B cell (primary cell): ENCODE measurements at regions of chr18 and their contacts with region 1.

Region 1: DNA sequence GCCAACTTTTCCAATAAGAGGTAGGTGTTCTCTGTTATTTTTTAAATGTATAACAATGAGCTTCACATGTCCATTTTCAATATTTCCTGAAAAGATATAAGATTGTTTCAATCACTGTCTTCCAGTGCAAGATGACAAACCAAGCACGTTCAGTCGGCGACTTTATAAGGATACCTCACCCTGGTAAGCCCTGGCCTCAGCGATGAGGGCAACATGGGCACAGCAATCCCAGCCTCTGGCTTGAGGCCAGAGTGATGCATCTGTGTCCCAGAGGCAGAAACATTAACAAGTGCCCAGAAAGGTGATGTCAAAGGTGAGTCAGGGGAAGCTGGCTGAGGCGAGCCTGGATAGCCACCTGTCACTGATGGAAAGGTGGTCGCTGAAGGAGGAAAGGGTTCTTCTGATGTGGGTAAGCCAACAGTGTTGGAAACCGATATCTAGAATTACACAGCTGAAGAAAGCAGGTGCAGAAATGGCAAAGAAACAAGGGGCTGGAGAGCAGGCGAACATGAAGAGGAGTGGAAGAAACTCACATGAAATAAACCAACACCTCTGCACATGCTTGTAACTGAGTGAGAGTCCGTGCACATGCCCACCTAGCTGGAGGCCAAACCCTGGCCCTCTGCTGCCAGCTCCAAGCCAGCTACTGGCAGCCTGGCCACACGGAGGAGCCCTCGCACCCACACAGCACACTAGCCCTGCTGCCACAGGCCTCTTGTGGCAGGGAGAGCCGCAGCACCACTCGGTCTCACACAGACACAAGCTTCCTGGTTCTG is 65.5 kb downstream of the FBXO15 start:
- DNase-seq: peak; percentile 71
- ATAC-seq: peak; percentile 97
- H3K4me3 ChIP-seq: peak overlapping the region in 3 of 5 experiments; percentile 8 to 17 (median 11)
- H3K4me3 Mint-ChIP-seq: peak overlapping the region; percentile 69
- H3K27ac ChIP-seq: peak overlapping the region; percentile 65 to 68
- H3K27ac Mint-ChIP-seq: peak overlapping the region; percentile 93
- H3K4me1 ChIP-seq: peaks cover 15% of the 10 kb centered on the region in 2 donors
- H3K4me1 Mint-ChIP-seq: peaks cover 23% of the 10 kb centered on the region
- H3K27me3 ChIP-seq: no peaks in the 10 kb centered on the region
- H3K27me3 Mint-ChIP-seq: peaks cover 6% of the 10 kb centered on the region
- CTCF ChIP-seq: peak; percentile 27

Region 2: DNA sequence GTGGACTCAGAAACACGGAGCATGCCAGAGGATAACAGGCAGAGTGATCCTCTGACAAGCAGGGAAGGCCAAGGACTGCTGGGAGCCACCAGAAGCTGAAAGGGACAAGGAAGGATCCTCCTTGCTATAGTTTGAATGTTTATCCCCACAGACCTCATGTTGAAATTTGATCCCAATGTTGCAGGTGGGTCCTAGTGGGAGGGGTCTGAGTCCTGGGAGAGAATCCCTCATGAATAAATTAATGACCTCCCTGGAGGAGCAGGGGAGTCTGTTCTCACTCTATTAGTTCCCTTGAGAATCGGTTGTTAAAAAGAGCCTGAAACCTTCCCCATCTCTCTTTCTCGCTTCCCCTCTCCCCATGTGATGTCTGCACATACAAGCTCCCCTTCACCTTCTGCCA is 58.9 kb before region 1 on chr18:
- CTCF ChIA-PET with region 1: no interaction called
- POLR2A ChIA-PET with region 1: no interaction called
- intact Hi-C with region 1: no loop called
- DNase-seq: no peak
- ATAC-seq: no peak
- H3K4me3 ChIP-seq: no peak overlapping the region
- H3K4me3 Mint-ChIP-seq: no peak overlapping the region
- H3K27ac ChIP-seq: no peak overlapping the region
- H3K27ac Mint-ChIP-seq: no peak overlapping the region
- H3K4me1 ChIP-seq: no peaks in the 10 kb centered on the region
- H3K4me1 Mint-ChIP-seq: peaks cover 4% of the 10 kb centered on the region
- H3K27me3 ChIP-seq: no peaks in the 10 kb centered on the region
- H3K27me3 Mint-ChIP-seq: peaks cover 24% of the 10 kb centered on the region
- CTCF ChIP-seq: no peak

Region 3: GRCh38 chr18:74040459-74041332 is 41.5 kb before region 1 on chr18:
- CTCF ChIA-PET with region 1: interaction called, 17 read pairs
- POLR2A ChIA-PET with region 1: no interaction called
- intact Hi-C with region 1: loop called (anchors 1 kb)
- DNase-seq: peak; percentile 62
- ATAC-seq: peak; percentile 79
- H3K4me3 ChIP-seq: no peak overlapping the region
- H3K4me3 Mint-ChIP-seq: no peak overlapping the region
- H3K27ac ChIP-seq: no peak overlapping the region
- H3K27ac Mint-ChIP-seq: no peak overlapping the region
- H3K4me1 ChIP-seq: peaks cover 18% of the 10 kb centered on the region in 2 donors
- H3K4me1 Mint-ChIP-seq: peaks cover 20% of the 10 kb centered on the region
- H3K27me3 ChIP-seq: no peaks in the 10 kb centered on the region
- H3K27me3 Mint-ChIP-seq: no peaks in the 10 kb centered on the region
- CTCF ChIP-seq: peak; percentile 66

Region 4: GRCh38 chr18:74063023-74063422 is 19.1 kb before region 1 on chr18:
- CTCF ChIA-PET with region 1: interaction called, 47 read pairs
- POLR2A ChIA-PET with region 1: interaction called, 23 read pairs
- intact Hi-C with region 1: loop called (anchors 1 kb)
- DNase-seq: peak; percentile 65
- ATAC-seq: peak; percentile 53
- H3K4me3 ChIP-seq: peak overlapping the region in 1 of 5 experiments; percentile 6
- H3K4me3 Mint-ChIP-seq: peak overlapping the region; percentile 29
- H3K27ac ChIP-seq: peak overlapping the region; percentile 72 to 77
- H3K27ac Mint-ChIP-seq: peak overlapping the region; percentile 94
- H3K4me1 ChIP-seq: peaks cover 53 to 59% of the 10 kb centered on the region in 2 donors
- H3K4me1 Mint-ChIP-seq: peaks cover 62% of the 10 kb centered on the region
- H3K27me3 ChIP-seq: no peaks in the 10 kb centered on the region
- H3K27me3 Mint-ChIP-seq: no peaks in the 10 kb centered on the region
- CTCF ChIP-seq: no peak

Region 5: GRCh38 chr18:74906184-74906583 is 824.0 kb after region 1 on chr18:
- CTCF ChIA-PET with region 1: no interaction called
- POLR2A ChIA-PET with region 1: no interaction called
- intact Hi-C with region 1: no loop called
- DNase-seq: no peak
- ATAC-seq: no peak
- H3K4me3 ChIP-seq: no peak overlapping the region
- H3K4me3 Mint-ChIP-seq: no peak overlapping the region
- H3K27ac ChIP-seq: no peak overlapping the region
- H3K27ac Mint-ChIP-seq: no peak overlapping the region
- H3K4me1 ChIP-seq: no peaks in the 10 kb centered on the region
- H3K4me1 Mint-ChIP-seq: no peaks in the 10 kb centered on the region
- H3K27me3 ChIP-seq: no peaks in the 10 kb centered on the region
- H3K27me3 Mint-ChIP-seq: no peaks in the 10 kb centered on the region
- CTCF ChIP-seq: no peak